Thyroid gland (tissue), 4 donors: ENCODE measurements at regions of chr12 and their contacts with region 1.

Region 1: GRCh38 chr12:77696183-77696582 is 134.5 kb upstream of the NAV3 start:
- DNase-seq: no peak
- H3K4me3 ChIP-seq: no peak overlapping the region
- H3K27ac ChIP-seq: no peak overlapping the region
- H3K4me1 ChIP-seq: no peaks in the 10 kb centered on the region
- H3K27me3 ChIP-seq: no peaks in the 10 kb centered on the region
- CTCF ChIP-seq: no peak
- POLR2A ChIP-seq: no peak

Region 2: DNA sequence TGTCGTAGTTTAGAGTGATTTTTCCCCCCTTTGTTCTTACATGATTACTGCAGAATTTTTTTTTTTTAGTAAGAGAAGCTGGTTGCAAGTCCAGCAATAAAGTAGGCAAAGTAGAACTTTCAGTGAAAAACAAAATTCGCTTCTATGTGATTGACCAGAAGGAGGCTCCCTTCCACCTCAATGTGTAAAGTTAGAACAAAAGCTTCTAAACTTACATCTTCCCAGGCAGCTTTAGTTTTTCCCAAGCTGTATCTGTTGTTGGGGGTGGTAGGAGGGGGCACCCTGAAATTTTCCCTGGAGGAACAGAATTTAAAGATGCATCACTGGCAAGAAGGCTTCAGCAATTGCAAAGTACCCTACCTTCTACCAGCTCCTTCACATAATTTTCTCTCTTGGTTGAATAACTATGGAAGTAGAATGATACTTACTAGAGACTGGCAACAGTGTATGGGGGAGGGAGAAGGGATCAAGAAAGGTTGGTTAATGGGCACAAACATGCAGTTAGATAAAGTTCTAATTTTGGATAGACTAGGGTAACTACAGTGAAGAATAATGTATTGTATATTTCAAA is 543.5 kb before region 1 on chr12:
- intact Hi-C with region 1: loop called (anchors 10 kb)
- DNase-seq: no peak
- H3K4me3 ChIP-seq: no peak overlapping the region
- H3K27ac ChIP-seq: no peak overlapping the region
- H3K4me1 ChIP-seq: no peaks in the 10 kb centered on the region
- H3K27me3 ChIP-seq: no peaks in the 10 kb centered on the region
- CTCF ChIP-seq: peak in 4 of 6 experiments; percentile 17 to 52 (median 37)
- POLR2A ChIP-seq: no peak

Region 3: DNA sequence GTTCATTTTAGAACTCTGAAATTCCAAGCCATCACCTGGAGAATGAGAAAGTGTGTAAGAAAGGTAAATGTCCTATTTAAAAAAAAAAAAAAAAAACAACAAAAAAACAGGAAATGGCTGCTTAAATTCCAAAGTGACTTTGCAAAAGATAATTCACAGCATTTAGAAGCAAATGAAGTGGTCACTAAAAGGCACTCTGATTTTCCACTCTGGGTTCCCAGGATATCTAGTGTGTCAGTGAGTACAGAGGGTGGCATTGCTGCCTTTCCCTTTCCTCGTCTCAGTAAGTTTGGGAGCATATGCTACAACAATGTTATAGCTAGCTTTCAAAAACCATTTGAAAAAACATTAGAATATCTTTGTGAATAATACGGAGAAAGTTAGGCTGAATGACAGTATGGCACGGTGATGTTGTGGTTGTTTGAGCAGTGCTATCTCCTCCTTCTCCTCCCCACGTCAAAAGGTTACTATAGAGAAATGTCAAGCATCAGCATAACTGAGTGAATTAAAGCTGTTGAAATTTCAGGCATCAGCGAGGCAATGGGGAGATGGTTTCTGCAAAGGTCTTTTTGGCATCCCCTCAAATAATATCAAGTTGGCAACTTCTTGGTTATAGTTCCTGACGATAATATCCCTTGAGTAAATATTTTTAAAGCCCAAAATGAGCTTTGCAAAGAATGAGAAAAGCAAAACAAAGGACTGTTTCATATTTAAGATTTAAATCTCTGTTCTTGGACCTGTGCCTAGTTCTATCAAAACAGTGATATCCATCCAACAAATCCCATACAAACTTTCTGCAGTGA is 466.3 kb before region 1 on chr12:
- intact Hi-C with region 1: no loop called
- DNase-seq: no peak
- H3K4me3 ChIP-seq: no peak overlapping the region
- H3K27ac ChIP-seq: no peak overlapping the region
- H3K4me1 ChIP-seq: peaks cover 2 to 3% of the 10 kb centered on the region in 2 donors
- H3K27me3 ChIP-seq: no peaks in the 10 kb centered on the region
- CTCF ChIP-seq: no peak
- POLR2A ChIP-seq: no peak